Posterior cingulate gyrus (tissue), 11 donors: ENCODE measurements at regions of chr5 and their contacts with region 1.

Region 1: GRCh38 chr5:88480756-88481499 is 212.3 kb upstream of the TMEM161B start:
- DNase-seq: no peak

Region 2: DNA sequence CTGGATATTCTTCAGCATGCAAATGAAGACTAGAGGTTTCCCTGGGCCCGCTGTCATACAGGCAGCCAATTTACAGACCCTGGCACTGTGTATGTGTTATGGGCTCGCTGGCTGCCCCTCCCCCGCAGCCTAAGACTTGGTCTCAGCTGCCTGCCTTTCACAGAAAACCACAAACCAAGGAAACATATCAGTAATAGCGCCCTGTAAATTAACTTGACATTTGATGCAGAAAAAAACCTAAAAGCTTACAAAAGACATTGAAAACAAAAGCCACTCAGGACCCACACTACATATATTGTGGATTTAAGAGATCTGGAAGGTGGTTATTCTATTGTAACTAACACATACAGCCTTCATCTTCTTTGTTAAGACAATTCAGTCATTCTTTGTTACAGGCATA is 74.7 kb after region 1 on chr5:
- intact Hi-C with region 1: no loop called
- DNase-seq: peak in 8 of 10 donors; percentile 4 to 88 (median 30)

Region 3: GRCh38 chr5:88644676-88645075 is 163.7 kb after region 1 on chr5:
- intact Hi-C with region 1: loop called (anchors 10 kb)
- DNase-seq: no peak